B cell (primary cell): ENCODE measurements at regions of chr7 and their contacts with region 1.

Region 1: GRCh38 chr7:76179686-76180085 is 22.0 kb upstream of the SRRM3 start:
- DNase-seq: no peak
- ATAC-seq: no peak
- H3K4me3 ChIP-seq: no peak overlapping the region
- H3K4me3 Mint-ChIP-seq: no peak overlapping the region
- H3K27ac ChIP-seq: no peak overlapping the region
- H3K27ac Mint-ChIP-seq: no peak overlapping the region
- H3K4me1 ChIP-seq: peaks cover 0 to 6% of the 10 kb centered on the region in 2 donors
- H3K4me1 Mint-ChIP-seq: peaks cover 3% of the 10 kb centered on the region
- H3K27me3 ChIP-seq: no peaks in the 10 kb centered on the region
- H3K27me3 Mint-ChIP-seq: peaks cover 4% of the 10 kb centered on the region
- CTCF ChIP-seq: no peak

Region 2: DNA sequence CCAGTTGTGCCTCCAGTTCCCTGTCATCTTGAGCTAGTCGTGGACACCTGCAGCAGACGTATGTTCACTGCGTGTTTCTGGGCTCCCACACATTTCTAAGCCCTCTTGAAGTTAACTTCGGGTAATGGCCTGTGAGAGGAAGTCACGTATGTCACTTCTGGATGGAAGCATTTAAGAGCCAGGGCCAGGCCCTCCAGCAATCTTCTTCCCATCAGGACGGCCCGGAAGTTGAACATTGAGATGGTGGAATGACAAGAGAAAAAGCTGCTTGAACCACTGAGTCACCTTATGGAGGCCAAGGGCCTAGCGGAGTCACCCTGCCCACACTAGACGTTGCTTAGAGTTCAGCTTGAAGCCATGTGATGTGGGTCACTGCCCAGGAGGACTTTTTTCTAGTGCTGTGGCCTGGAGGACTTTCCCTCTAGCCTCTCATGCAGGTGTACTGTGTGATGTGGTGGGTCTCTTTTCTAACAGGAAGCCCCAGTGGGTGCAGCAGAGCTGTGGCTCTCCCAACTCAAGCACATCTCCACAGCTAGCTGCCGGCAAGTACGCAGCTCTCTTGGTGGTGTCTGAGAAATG is 251.3 kb before region 1 on chr7:
- CTCF ChIA-PET with region 1: no interaction called
- POLR2A ChIA-PET with region 1: no interaction called
- intact Hi-C with region 1: no loop called
- DNase-seq: peak; percentile 20
- ATAC-seq: peak; percentile 54
- H3K4me3 ChIP-seq: no peak overlapping the region
- H3K4me3 Mint-ChIP-seq: no peak overlapping the region
- H3K27ac ChIP-seq: peak overlapping the region in 1 of 2 donors; percentile 30
- H3K27ac Mint-ChIP-seq: peak overlapping the region; percentile 53
- H3K4me1 ChIP-seq: peaks cover 8 to 11% of the 10 kb centered on the region in 2 donors
- H3K4me1 Mint-ChIP-seq: peaks cover 17% of the 10 kb centered on the region
- H3K27me3 ChIP-seq: no peaks in the 10 kb centered on the region
- H3K27me3 Mint-ChIP-seq: no peaks in the 10 kb centered on the region
- CTCF ChIP-seq: no peak

Region 3: DNA sequence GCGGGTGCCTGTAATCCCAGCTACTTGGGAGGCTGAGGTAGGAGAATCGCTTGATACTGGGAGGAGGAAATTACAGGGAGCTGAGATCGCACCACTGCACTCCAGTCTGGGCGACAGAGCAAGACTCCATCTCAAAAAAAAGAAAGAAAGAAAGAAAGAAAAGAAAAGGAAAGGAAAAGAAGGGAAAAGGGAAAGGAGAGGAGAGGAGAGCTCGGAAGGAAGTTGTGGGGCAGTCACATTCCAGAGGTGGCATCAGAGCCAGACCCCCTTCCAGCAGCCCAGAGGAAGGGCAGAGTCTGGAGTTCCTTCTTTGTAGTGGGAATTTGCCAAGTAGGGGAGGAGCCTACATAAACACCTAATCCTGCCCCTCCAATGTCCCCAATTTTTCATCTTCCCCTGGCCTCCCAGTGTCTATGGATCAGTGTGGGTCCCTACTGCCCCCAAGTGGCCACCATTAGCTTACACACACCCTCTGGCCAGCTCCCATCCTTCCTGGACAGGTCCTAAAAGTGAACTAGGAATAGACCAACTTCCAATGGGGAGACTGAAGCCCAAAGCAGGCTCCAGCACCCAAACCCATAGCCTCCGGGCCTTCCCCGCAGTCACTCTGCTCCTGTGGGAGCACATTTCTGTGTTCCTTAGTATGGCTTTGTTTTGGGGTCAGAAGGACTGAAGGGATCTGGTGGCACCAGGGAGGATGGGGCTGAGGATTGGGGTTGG is 83.2 kb after region 1 on chr7:
- CTCF ChIA-PET with region 1: interaction called, 4 read pairs
- POLR2A ChIA-PET with region 1: no interaction called
- intact Hi-C with region 1: loop called (anchors 2 kb)
- DNase-seq: peak; percentile 46
- ATAC-seq: no peak
- H3K4me3 ChIP-seq: no peak overlapping the region
- H3K4me3 Mint-ChIP-seq: no peak overlapping the region
- H3K27ac ChIP-seq: no peak overlapping the region
- H3K27ac Mint-ChIP-seq: no peak overlapping the region
- H3K4me1 ChIP-seq: peaks cover 14 to 15% of the 10 kb centered on the region in 2 donors
- H3K4me1 Mint-ChIP-seq: peaks cover 8% of the 10 kb centered on the region
- H3K27me3 ChIP-seq: peaks cover 0 to 52% (median 16%) of the 10 kb centered on the region in 4 experiments
- H3K27me3 Mint-ChIP-seq: peaks cover 25% of the 10 kb centered on the region
- CTCF ChIP-seq: peak; percentile 73